Activated naive CD4-positive, alpha-beta T cell treated with anti-CD3 and anti-CD28 coated beads for 36 hours (primary cell): ENCODE measurements at regions of chr2 and their contacts with region 1.

Region 1: DNA sequence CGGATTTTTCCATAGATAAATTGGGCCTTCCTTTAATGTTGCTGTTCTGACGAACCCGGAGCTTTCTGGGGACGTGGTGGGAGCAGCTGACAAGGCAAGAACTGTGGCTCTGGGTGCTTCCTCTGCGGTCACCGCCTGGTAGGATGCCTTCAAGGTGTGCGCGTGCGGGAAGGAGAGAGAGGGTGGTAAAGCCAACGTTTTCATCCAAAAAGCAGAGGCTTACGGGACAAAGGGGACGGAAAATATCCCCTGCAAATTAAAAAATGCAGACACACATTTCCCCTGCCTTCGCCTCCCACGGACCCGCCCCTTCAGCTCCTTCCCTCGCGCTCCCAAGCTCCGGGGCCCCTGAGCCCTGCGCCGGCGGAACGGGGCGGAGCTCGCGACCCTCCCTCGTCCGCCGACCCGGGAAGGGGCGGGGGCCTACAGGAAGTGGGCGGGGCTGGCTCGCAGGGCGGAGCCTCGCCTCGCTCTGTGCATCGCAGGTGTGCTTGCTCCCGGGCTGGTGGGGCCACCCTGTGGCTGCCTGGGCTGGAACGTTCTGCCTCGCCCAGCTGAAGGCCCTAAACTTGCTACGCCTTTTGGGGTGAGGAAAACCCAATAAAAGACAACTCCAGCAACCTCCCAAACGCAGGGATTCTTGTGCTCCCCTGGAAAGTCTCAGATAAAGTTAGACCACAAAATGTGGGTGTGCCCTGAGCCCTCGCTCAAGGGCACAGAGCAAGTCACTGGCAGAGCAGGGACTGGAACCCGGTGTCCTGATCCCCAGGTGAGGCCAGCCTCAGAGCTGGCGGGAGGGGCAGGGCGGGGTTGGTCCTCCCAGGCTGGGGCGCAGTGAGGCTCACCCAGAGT is 25.4 kb upstream of the SLC66A3 start:
- DNase-seq: peak; percentile 89
- H3K4me3 Mint-ChIP-seq: peak overlapping the region; percentile 57
- H3K27ac Mint-ChIP-seq: peak overlapping the region; percentile 71
- H3K4me1 Mint-ChIP-seq: peaks cover 21% of the 10 kb centered on the region
- H3K27me3 Mint-ChIP-seq: no peaks in the 10 kb centered on the region

Region 2: DNA sequence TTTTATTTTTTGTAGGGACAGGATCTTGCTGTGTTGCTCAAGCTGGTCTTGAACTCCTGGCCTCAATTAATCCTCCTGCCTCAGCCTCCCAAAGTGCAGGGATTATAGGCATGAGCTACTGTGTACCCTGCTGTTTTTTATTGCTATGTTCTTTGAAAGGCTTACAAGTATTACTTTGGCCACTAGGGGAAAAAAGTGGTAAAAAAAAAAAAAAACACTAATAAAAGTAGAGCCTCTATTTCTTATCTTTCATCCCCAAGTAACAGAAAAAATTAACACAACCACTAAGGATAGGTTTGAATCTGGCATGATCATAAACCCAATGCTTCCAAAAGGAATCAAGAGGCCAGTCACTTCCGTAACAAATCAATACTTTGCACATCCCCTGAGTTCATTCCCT is 451.6 kb before region 1 on chr2:
- CTCF ChIA-PET with region 1: no interaction called
- intact Hi-C with region 1: no loop called
- DNase-seq: no peak
- H3K4me3 Mint-ChIP-seq: no peak overlapping the region
- H3K27ac Mint-ChIP-seq: peak overlapping the region; percentile 59
- H3K4me1 Mint-ChIP-seq: peaks cover 41% of the 10 kb centered on the region
- H3K27me3 Mint-ChIP-seq: no peaks in the 10 kb centered on the region

Region 3: GRCh38 chr2:10911261-10912075 is 218.4 kb before region 1 on chr2 and contains the start of gene KCNF1:
- CTCF ChIA-PET with region 1: interaction called, 3 read pairs
- intact Hi-C with region 1: loop called (anchors 5 kb)
- DNase-seq: no peak
- H3K4me3 Mint-ChIP-seq: no peak within 1 kb of the TSS
- H3K27ac Mint-ChIP-seq: no peak within 1 kb of the TSS
- H3K4me1 Mint-ChIP-seq: peaks cover 9% of the 10 kb centered on the region
- H3K27me3 Mint-ChIP-seq: peaks cover 32% of the 10 kb centered on the region
- total RNA-seq, gene KCNF1: not detected

Region 4: GRCh38 chr2:11160731-11161455 is 31.1 kb after region 1 on chr2:
- CTCF ChIA-PET with region 1: interaction called, 30 read pairs
- intact Hi-C with region 1: no loop called
- DNase-seq: peak; percentile 30
- H3K4me3 Mint-ChIP-seq: peak overlapping the region; percentile 27
- H3K27ac Mint-ChIP-seq: peak overlapping the region; percentile 83
- H3K4me1 Mint-ChIP-seq: peaks cover 19% of the 10 kb centered on the region
- H3K27me3 Mint-ChIP-seq: no peaks in the 10 kb centered on the region

Region 5: GRCh38 chr2:11344342-11344955 is 214.6 kb after region 1 on chr2 and contains the start of gene ROCK2:
- CTCF ChIA-PET with region 1: interaction called, 4 read pairs
- intact Hi-C with region 1: loop called (anchors 2 kb)
- DNase-seq: peak; percentile 72
- H3K4me3 Mint-ChIP-seq: peak within 1 kb of the TSS; percentile 99
- H3K27ac Mint-ChIP-seq: peak within 1 kb of the TSS; percentile 85
- H3K4me1 Mint-ChIP-seq: peaks cover 29% of the 10 kb centered on the region
- H3K27me3 Mint-ChIP-seq: no peaks in the 10 kb centered on the region
- total RNA-seq, gene ROCK2: 8.4 to 9.4 TPM

Region 6: GRCh38 chr2:11446733-11447248 is 317.0 kb after region 1 on chr2:
- CTCF ChIA-PET with region 1: interaction called, 14 read pairs
- intact Hi-C with region 1: loop called (anchors 1 kb)
- DNase-seq: peak; percentile 60
- H3K4me3 Mint-ChIP-seq: no peak overlapping the region
- H3K27ac Mint-ChIP-seq: no peak overlapping the region
- H3K4me1 Mint-ChIP-seq: no peaks in the 10 kb centered on the region
- H3K27me3 Mint-ChIP-seq: no peaks in the 10 kb centered on the region

Region 7: GRCh38 chr2:11477994-11478393 is 348.2 kb after region 1 on chr2:
- CTCF ChIA-PET with region 1: interaction called, 4 read pairs
- intact Hi-C with region 1: loop called (anchors 1 kb)
- DNase-seq: peak; percentile 94
- H3K4me3 Mint-ChIP-seq: no peak overlapping the region
- H3K27ac Mint-ChIP-seq: no peak overlapping the region
- H3K4me1 Mint-ChIP-seq: peaks cover 1% of the 10 kb centered on the region
- H3K27me3 Mint-ChIP-seq: peaks cover 27% of the 10 kb centered on the region